Left cardiac atrium (tissue), 4 donors: ENCODE measurements at regions of chr12 and their contacts with region 1.

Region 1: GRCh38 chr12:34016361-34016760 is 5.9 kb upstream of the ALG10 start:
- DNase-seq: no peak
- ATAC-seq: no peak

Region 2: GRCh38 chr12:32947206-32948067 is 1068.9 kb before region 1 on chr12:
- intact Hi-C with region 1: loop called in 1 of 2 experiments (anchors 10 kb)
- DNase-seq: no peak
- ATAC-seq: no peak